Activated CD8-positive, alpha-beta T cell treated with anti-CD3 and anti-CD28 coated beads, Interleukin-2, amount 10 ng/mL, durations not matched to agents 7 days and 5 days (primary cell): ENCODE measurements at regions of chr9 and their contacts with region 1.

Region 1: GRCh38 chr9:2132484-2133082 is 117.4 kb downstream of the SMARCA2 start:
- DNase-seq: no peak
- ATAC-seq: no peak
- H3K4me3 Mint-ChIP-seq: no peak overlapping the region
- H3K27ac Mint-ChIP-seq: no peak overlapping the region
- H3K4me1 Mint-ChIP-seq: peaks cover 11% of the 10 kb centered on the region
- H3K27me3 Mint-ChIP-seq: no peaks in the 10 kb centered on the region

Region 2: GRCh38 chr9:1929722-1930621 is 202.6 kb before region 1 on chr9:
- CTCF ChIA-PET with region 1: no interaction called
- POLR2A ChIA-PET with region 1: no interaction called
- DNase-seq: no peak
- ATAC-seq: no peak
- H3K4me3 Mint-ChIP-seq: no peak overlapping the region
- H3K27ac Mint-ChIP-seq: no peak overlapping the region
- H3K4me1 Mint-ChIP-seq: no peaks in the 10 kb centered on the region
- H3K27me3 Mint-ChIP-seq: peaks cover 12% of the 10 kb centered on the region

Region 3: GRCh38 chr9:2087500-2088313 is 44.9 kb before region 1 on chr9:
- CTCF ChIA-PET with region 1: no interaction called
- POLR2A ChIA-PET with region 1: no interaction called
- DNase-seq: peak; percentile 33
- ATAC-seq: peak; percentile 86
- H3K4me3 Mint-ChIP-seq: no peak overlapping the region
- H3K27ac Mint-ChIP-seq: no peak overlapping the region
- H3K4me1 Mint-ChIP-seq: peaks cover 19% of the 10 kb centered on the region
- H3K27me3 Mint-ChIP-seq: no peaks in the 10 kb centered on the region

Region 4: GRCh38 chr9:2120926-2121689 is 11.5 kb before region 1 on chr9:
- CTCF ChIA-PET with region 1: interaction called, 23 read pairs
- POLR2A ChIA-PET with region 1: no interaction called
- DNase-seq: no peak
- ATAC-seq: no peak
- H3K4me3 Mint-ChIP-seq: no peak overlapping the region
- H3K27ac Mint-ChIP-seq: no peak overlapping the region
- H3K4me1 Mint-ChIP-seq: peaks cover 20% of the 10 kb centered on the region
- H3K27me3 Mint-ChIP-seq: no peaks in the 10 kb centered on the region

Region 5: DNA sequence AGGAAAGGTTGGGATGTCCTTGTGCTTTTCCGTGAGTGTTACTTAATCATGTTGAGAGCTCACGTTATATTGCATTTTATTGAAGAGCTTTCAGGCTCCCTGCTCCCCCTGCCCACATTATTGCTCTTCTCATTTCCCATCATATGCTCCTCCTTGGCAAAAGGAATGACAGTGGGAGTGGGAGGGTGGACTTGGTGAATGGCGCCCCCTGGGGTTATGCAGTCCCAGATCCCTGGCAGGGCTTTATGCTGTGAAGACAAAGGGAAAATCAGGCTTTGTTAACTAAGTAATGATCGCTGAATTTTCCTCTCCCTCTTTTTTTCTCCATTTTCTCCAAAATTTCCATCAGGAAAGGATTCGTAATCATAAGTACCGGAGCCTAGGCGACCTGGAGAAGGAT is 49.2 kb after region 1 on chr9:
- CTCF ChIA-PET with region 1: interaction called, 13 read pairs
- POLR2A ChIA-PET with region 1: no interaction called
- DNase-seq: no peak
- ATAC-seq: no peak
- H3K4me3 Mint-ChIP-seq: no peak overlapping the region
- H3K27ac Mint-ChIP-seq: no peak overlapping the region
- H3K4me1 Mint-ChIP-seq: no peaks in the 10 kb centered on the region
- H3K27me3 Mint-ChIP-seq: no peaks in the 10 kb centered on the region

Region 6: GRCh38 chr9:2727966-2728613 is 595.5 kb after region 1 on chr9:
- CTCF ChIA-PET with region 1: interaction called, 10 read pairs
- POLR2A ChIA-PET with region 1: no interaction called
- DNase-seq: peak; percentile 30
- ATAC-seq: no peak
- H3K4me3 Mint-ChIP-seq: no peak overlapping the region
- H3K27ac Mint-ChIP-seq: no peak overlapping the region
- H3K4me1 Mint-ChIP-seq: peaks cover 5% of the 10 kb centered on the region
- H3K27me3 Mint-ChIP-seq: no peaks in the 10 kb centered on the region